MCF 10A (cell line): ENCODE measurements at regions of chr5 and their contacts with region 1.

Region 1: DNA sequence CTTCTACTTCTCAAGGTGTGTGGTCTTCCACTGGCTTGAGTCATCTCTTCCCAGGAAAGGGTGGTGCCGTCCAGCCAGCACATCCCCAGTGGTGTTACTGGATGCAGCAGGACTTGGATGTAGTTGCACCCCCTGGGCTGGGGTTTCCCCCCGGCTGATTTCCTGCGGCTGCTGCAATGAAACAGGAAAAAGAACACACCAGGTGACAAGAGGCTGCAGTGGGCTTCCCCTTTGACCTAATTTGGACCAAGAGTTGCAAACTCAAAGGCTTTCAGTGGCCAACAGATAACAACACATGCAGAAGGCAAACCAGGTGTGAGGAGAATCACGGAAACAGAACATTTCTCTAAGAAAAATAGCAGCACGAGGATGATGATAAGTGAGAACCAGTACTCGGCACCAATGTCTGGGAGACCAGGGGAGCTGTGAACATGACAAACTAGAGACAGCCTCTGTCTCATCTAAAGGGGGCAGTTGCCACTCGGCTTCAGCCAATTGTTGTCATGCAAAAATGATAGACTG is 83.7 kb downstream of the PDE6A start:
- DNase-seq: peak; percentile 94
- H3K4me3 Mint-ChIP-seq: no peak overlapping the region
- H3K27ac Mint-ChIP-seq: peak overlapping the region; percentile 21
- H3K4me1 Mint-ChIP-seq: peaks cover 38% of the 10 kb centered on the region
- H3K27me3 Mint-ChIP-seq: no peaks in the 10 kb centered on the region
- CTCF ChIP-seq: no peak

Region 2: DNA sequence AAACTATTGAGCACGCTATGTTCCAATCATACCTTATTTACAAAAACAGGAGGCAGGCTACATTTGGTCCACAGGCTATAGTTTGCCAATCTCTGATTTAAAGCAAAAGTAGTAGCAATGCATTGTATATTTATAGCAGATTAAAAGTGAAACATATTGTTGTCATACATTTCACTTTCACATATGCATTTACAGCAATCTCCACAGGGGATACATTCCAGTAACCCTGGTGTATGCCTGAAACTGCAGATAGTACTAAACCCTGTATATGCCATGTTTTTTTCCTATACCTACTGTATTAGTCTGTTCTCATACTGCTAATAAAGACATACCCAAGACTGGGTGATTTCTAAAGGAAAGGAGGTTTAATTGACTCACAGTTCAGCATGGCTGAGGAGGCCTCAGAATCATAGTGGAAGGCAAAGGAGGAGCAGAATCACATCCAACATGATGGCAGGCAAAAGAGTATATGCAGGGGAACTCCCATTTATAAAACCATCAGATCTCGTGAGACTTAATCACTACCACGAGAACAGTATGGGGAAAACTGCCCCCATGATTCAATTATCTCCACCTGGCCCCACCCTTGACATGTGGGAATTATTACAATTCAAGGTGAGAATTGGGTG is 231.4 kb after region 1 on chr5:
- CTCF ChIA-PET with region 1: no interaction called
- POLR2A ChIA-PET with region 1: no interaction called
- intact Hi-C with region 1: no loop called
- DNase-seq: no peak
- H3K4me3 Mint-ChIP-seq: no peak overlapping the region
- H3K27ac Mint-ChIP-seq: no peak overlapping the region
- H3K4me1 Mint-ChIP-seq: no peaks in the 10 kb centered on the region
- H3K27me3 Mint-ChIP-seq: no peaks in the 10 kb centered on the region
- CTCF ChIP-seq: no peak

Region 3: GRCh38 chr5:150106674-150107426 is 246.0 kb after region 1 on chr5:
- CTCF ChIA-PET with region 1: no interaction called
- POLR2A ChIA-PET with region 1: no interaction called
- intact Hi-C with region 1: no loop called
- DNase-seq: no peak
- H3K4me3 Mint-ChIP-seq: no peak overlapping the region
- H3K27ac Mint-ChIP-seq: no peak overlapping the region
- H3K4me1 Mint-ChIP-seq: peaks cover 31% of the 10 kb centered on the region
- H3K27me3 Mint-ChIP-seq: no peaks in the 10 kb centered on the region
- CTCF ChIP-seq: no peak

Region 4: GRCh38 chr5:150357326-150358260 is 496.7 kb after region 1 on chr5 and contains the start of gene TCOF1:
- CTCF ChIA-PET with region 1: no interaction called
- POLR2A ChIA-PET with region 1: no interaction called
- intact Hi-C with region 1: loop called (anchors 5 kb)
- DNase-seq: peak; percentile 99
- H3K4me3 Mint-ChIP-seq: peak within 1 kb of the TSS; percentile 81
- H3K27ac Mint-ChIP-seq: peak within 1 kb of the TSS; percentile 72
- H3K4me1 Mint-ChIP-seq: peaks cover 16% of the 10 kb centered on the region
- H3K27me3 Mint-ChIP-seq: no peaks in the 10 kb centered on the region
- CTCF ChIP-seq: no peak
- total RNA-seq, gene TCOF1: 68.4 and 83.5 TPM in 2 replicates

Region 5: GRCh38 chr5:150372639-150373038 is 511.8 kb after region 1 on chr5:
- CTCF ChIA-PET with region 1: no interaction called
- POLR2A ChIA-PET with region 1: no interaction called
- intact Hi-C with region 1: no loop called
- DNase-seq: no peak
- H3K4me3 Mint-ChIP-seq: no peak overlapping the region
- H3K27ac Mint-ChIP-seq: no peak overlapping the region
- H3K4me1 Mint-ChIP-seq: no peaks in the 10 kb centered on the region
- H3K27me3 Mint-ChIP-seq: no peaks in the 10 kb centered on the region
- CTCF ChIP-seq: no peak